PC-3 (cell line): ENCODE measurements at regions of chr2 and their contacts with region 1.

Region 1: GRCh38 chr2:111883661-111884591 is at the start of gene ANAPC1:
- DNase-seq: peak; percentile 81
- ATAC-seq: peak; percentile 91
- H3K4me3 ChIP-seq: peak within 1 kb of the TSS; percentile 99
- H3K27ac ChIP-seq: peak within 1 kb of the TSS; percentile 70
- H3K4me1 ChIP-seq: peaks cover 9% of the 10 kb centered on the region; the same call in 1 of the 2 replicates
- H3K27me3 ChIP-seq: no peaks in the 10 kb centered on the region
- CTCF ChIP-seq: no peak
- total RNA-seq, gene ANAPC1: 94.4 and 97.9 TPM in 2 replicates

Region 2: GRCh38 chr2:112048887-112049286 is 165.0 kb after region 1 on chr2:
- CTCF ChIA-PET with region 1: interaction called, 3 read pairs
- POLR2A ChIA-PET with region 1: no interaction called
- intact Hi-C with region 1: loop called (anchors 1 kb)
- DNase-seq: peak; percentile 86
- ATAC-seq: peak; percentile 64
- H3K4me3 ChIP-seq: no peak overlapping the region
- H3K27ac ChIP-seq: no peak overlapping the region
- H3K4me1 ChIP-seq: peaks cover 6% of the 10 kb centered on the region
- H3K27me3 ChIP-seq: no peaks in the 10 kb centered on the region
- CTCF ChIP-seq: peak; percentile 72

Region 3: GRCh38 chr2:112254466-112255239 is 370.7 kb after region 1 on chr2 and contains the start of gene ZC3H8:
- CTCF ChIA-PET with region 1: no interaction called
- POLR2A ChIA-PET with region 1: no interaction called
- intact Hi-C with region 1: loop called (anchors 10 kb)
- DNase-seq: peak; percentile 93
- ATAC-seq: peak; percentile 97
- H3K4me3 ChIP-seq: peak within 1 kb of the TSS; percentile 88
- H3K27ac ChIP-seq: peak within 1 kb of the TSS; percentile 39
- H3K4me1 ChIP-seq: peaks cover 18% of the 10 kb centered on the region
- H3K27me3 ChIP-seq: no peaks in the 10 kb centered on the region
- CTCF ChIP-seq: no peak; the same call in 1 of the 2 replicates
- total RNA-seq, gene ZC3H8: 13.1 and 17.0 TPM in 2 replicates

Region 4: DNA sequence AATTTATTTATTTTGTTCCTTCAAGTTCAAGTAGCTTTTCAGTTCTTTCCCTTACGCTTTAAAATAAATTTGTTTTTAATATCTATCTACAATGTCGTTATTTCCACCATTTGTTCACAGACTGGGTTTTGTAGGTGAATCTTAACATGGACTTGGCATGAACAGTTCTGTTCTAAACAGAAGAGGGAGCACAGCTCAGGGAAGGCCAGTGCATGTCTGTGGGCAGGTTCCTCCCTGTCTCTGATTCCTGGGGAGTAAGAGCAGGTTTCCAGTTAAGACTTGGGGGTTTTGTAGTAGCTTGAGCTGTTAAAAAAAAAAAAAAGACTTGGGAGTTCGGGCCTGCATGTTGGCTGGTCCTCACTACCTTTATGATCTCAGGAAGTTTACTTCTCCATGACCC is 609.1 kb after region 1 on chr2:
- CTCF ChIA-PET with region 1: no interaction called
- POLR2A ChIA-PET with region 1: interaction called, 15 read pairs
- intact Hi-C with region 1: no loop called
- DNase-seq: peak; percentile 25
- ATAC-seq: peak; percentile 30
- H3K4me3 ChIP-seq: no peak overlapping the region; the same call in 1 of the 2 replicates
- H3K27ac ChIP-seq: peak overlapping the region; percentile 84
- H3K4me1 ChIP-seq: peaks cover 44% of the 10 kb centered on the region
- H3K27me3 ChIP-seq: no peaks in the 10 kb centered on the region
- CTCF ChIP-seq: peak; percentile 32

Region 5: GRCh38 chr2:113092864-113093612 is 1209.1 kb after region 1 on chr2:
- CTCF ChIA-PET with region 1: interaction called, 11 read pairs
- POLR2A ChIA-PET with region 1: no interaction called
- intact Hi-C with region 1: no loop called
- DNase-seq: no peak
- ATAC-seq: no peak
- H3K4me3 ChIP-seq: no peak overlapping the region
- H3K27ac ChIP-seq: no peak overlapping the region
- H3K4me1 ChIP-seq: no peaks in the 10 kb centered on the region
- H3K27me3 ChIP-seq: no peaks in the 10 kb centered on the region
- CTCF ChIP-seq: no peak